ENCODE measurements at regions of chr16 and their contacts with region 1.

Region 1: GRCh38 chr16:29848420-29849297 is 14.4 kb downstream of the CDIPT start:
- DNase-seq: no peak
- H3K4me3 ChIP-seq: no peak overlapping the region
- H3K27ac ChIP-seq: no peak overlapping the region
- H3K27me3 ChIP-seq: no peaks in the 10 kb centered on the region
- CTCF ChIP-seq: peak; percentile 92

Region 2: GRCh38 chr16:29700253-29700987 is 148.2 kb before region 1 on chr16:
- CTCF ChIA-PET with region 1: interaction called, 22 read pairs
- POLR2A ChIA-PET with region 1: no interaction called
- DNase-seq: peak; percentile 72
- H3K4me3 ChIP-seq: no peak overlapping the region
- H3K27ac ChIP-seq: no peak overlapping the region
- H3K27me3 ChIP-seq: peaks cover 7% of the 10 kb centered on the region
- CTCF ChIP-seq: peak; percentile 90

Region 3: DNA sequence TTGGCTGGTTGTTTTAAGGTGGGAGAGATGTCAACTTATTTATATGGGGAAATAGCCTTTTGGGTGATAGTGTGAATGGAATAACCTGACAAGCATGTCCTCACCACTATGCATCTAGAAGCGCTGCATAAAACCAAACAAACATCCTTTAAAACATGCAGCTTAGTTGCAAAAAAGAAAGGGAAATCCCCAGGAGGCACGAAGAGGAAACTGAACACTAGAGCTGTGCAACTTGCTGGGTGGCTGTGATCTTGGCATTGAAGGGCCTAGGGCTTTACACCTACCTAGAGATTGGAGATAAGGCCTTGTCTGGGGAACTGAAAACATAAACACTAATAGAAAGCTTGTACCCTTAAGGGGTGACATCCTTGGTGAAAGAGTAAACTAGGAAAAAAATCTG is 110.1 kb before region 1 on chr16:
- CTCF ChIA-PET with region 1: no interaction called
- POLR2A ChIA-PET with region 1: no interaction called
- DNase-seq: no peak
- H3K4me3 ChIP-seq: no peak overlapping the region
- H3K27ac ChIP-seq: no peak overlapping the region
- H3K27me3 ChIP-seq: peaks cover 16% of the 10 kb centered on the region
- CTCF ChIP-seq: no peak

Region 4: GRCh38 chr16:29757950-29758466 is 90.7 kb before region 1 on chr16:
- CTCF ChIA-PET with region 1: no interaction called
- POLR2A ChIA-PET with region 1: no interaction called
- DNase-seq: peak; percentile 47
- H3K4me3 ChIP-seq: no peak overlapping the region
- H3K27ac ChIP-seq: peak overlapping the region; percentile 57
- H3K27me3 ChIP-seq: peaks cover 3% of the 10 kb centered on the region
- CTCF ChIP-seq: peak; percentile 41; the same call in 1 of the 2 replicates

Region 5: DNA sequence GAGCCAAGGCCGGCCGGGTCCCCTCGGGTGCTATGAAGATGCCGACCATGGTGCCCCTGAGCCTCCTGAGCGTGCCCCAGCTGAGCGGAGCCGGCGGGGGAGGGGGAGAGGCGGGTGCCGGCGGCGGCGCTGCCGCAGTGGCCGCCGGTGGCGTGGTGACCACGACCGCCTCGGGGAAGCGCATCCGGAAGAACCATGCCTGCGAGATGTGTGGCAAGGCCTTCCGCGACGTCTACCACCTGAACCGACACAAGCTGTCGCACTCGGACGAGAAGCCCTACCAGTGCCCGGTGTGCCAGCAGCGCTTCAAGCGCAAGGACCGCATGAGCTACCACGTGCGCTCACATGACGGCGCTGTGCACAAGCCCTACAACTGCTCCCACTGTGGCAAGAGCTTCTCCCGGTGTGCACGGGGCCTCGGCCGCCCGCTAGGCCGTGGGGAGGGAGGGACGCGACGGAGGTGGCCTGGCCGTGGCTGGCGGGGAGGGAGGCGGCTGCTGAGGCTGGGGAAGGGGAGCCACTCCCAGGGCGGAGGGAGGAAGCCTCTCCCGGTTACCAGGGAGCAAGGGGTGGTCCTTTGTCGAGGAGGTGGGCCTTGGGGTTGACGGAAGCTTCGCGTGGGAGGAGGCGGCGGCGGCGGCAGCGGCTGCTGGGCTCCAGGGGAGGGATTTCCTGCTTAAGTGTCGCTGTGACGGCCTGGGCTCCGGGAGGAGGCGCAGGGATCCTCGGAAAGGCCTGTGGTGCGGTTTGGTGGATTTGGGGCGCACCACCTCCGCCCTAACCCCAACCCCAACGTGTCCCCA is 41.0 kb before region 1 on chr16:
- CTCF ChIA-PET with region 1: interaction called, 45 read pairs
- POLR2A ChIA-PET with region 1: interaction called, 6 read pairs
- DNase-seq: peak; percentile 76
- H3K4me3 ChIP-seq: peak overlapping the region; percentile 72
- H3K27ac ChIP-seq: peak overlapping the region; percentile 65
- H3K27me3 ChIP-seq: no peaks in the 10 kb centered on the region
- CTCF ChIP-seq: peak; percentile 62

Region 6: DNA sequence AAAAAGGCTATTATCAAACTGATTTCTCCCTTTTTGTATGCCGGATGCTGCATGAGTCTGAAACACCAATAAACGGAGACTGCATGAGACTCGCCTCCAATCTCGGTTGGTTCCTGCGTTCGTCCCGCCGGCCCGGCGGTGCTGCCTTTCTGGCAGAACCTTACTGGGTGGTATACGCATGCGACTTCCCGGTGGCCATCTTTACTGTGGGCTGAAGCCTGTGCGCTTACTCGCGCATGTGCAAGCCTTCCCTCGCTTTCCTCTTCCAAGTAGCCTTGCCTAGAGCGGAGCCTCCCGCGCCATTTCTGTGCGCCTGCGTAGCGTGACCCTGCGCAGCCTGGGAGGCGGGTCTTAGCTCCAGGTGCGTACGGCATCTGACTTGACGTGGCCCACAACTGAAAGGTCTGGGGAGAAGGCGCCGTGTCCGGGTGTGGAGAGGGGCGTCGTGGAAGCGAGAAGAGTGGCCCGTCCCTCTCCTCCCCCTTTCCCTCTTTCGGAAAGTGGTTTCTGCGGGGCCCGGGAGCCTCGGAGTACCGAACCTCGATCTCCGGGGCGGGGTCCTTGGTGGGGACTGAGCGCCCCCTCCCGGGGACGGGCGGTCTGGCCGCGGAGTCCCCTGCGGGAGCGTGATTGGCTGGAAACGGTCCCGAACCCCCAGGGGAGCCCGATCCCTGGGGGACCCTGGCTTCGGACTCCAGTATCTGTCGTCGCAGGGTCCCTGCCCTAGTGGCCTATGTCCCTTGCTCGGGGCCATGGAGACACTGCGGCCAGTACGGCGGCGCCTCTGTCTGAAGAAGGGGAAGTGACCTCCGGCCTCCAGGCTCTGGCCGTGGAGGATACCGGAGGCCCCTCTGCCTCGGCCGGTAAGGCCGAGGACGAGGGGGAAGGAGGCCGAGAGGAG is 32.6 kb before region 1 on chr16 and contains the start of gene PAGR1:
- CTCF ChIA-PET with region 1: interaction called, 41 read pairs
- POLR2A ChIA-PET with region 1: interaction called, 10 read pairs
- DNase-seq: peak; percentile 100
- H3K4me3 ChIP-seq: peak within 1 kb of the TSS; percentile 83
- H3K27ac ChIP-seq: peak within 1 kb of the TSS; percentile 80
- H3K27me3 ChIP-seq: no peaks in the 10 kb centered on the region
- CTCF ChIP-seq: peak; percentile 85
- polyA plus RNA-seq, gene PAGR1: 14.3 and 14.5 TPM in 2 replicates

Region 7: DNA sequence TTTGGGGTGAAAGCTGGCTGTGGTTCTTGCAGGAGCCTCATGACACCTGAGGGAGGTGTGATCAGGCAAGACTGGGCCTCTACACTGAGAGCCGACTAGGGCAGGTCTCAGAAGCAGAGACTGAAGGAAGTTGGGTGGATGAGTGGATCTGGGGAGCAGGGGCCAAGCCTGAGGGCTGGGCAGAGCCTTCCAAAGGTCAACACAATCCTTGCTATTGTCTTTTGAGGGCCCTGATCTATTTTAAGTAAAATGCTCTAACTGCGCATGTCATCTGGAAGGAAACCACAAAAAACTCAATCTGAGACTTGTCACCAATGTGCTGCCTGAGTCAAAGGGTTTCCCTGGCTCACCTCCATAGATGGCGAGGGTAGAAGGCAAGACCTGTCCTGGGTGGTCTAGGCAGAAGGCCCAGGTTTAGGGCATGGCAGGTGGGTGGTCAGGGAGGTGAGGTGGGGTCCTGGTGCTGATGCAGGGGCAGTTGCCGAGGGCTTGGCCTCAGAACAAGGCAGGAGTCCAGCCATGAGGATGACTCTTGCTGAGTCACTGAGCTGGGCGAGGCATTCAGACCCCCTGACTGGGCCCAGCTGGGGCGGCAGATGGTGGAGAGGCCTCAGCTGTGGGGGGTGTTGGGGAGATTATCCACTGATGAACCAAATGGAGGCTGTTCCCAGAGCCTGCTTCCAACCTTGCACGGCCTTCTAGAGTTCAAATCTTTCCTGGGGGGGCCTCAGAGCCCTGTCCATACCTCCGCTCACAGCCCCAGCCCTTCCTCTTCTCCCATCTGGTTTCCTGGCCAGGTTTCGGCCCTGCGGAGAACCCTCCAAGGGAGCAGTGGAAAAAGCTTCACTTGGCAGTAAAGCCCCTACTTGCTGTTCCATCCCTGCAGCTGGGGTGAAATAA is 23.3 kb before region 1 on chr16:
- CTCF ChIA-PET with region 1: interaction called, 41 read pairs
- POLR2A ChIA-PET with region 1: interaction called, 7 read pairs
- DNase-seq: peak; percentile 80
- H3K4me3 ChIP-seq: peak overlapping the region; percentile 49
- H3K27ac ChIP-seq: peak overlapping the region; percentile 99
- H3K27me3 ChIP-seq: no peaks in the 10 kb centered on the region
- CTCF ChIP-seq: no peak

Region 8: DNA sequence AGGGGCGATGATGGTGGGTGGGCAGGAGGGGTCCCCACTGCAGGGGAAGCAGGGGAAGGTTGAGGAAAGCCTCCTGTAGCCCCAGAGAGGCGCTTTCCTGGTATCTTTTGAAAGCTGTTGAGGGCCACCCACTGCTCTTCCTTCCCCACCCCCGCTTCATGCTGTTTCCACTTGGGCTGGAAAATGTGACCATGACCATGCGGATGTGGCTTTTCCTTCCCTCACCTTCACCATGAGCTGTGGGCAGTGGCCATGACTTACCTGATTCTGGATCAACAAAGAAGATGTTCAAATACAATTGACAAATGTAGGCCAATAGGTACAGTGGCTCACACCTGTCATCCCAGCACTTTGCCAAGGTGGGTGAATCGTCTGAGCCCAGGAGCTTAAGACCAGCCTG is 14.6 kb before region 1 on chr16:
- CTCF ChIA-PET with region 1: interaction called, 21 read pairs
- POLR2A ChIA-PET with region 1: interaction called, 3 read pairs
- DNase-seq: no peak
- H3K4me3 ChIP-seq: no peak overlapping the region
- H3K27ac ChIP-seq: no peak overlapping the region
- H3K27me3 ChIP-seq: no peaks in the 10 kb centered on the region
- CTCF ChIP-seq: no peak

Region 9: GRCh38 chr16:29891525-29892457 is 43.1 kb after region 1 on chr16:
- CTCF ChIA-PET with region 1: no interaction called
- POLR2A ChIA-PET with region 1: no interaction called
- DNase-seq: no peak
- H3K4me3 ChIP-seq: no peak overlapping the region
- H3K27ac ChIP-seq: no peak overlapping the region
- H3K27me3 ChIP-seq: no peaks in the 10 kb centered on the region
- CTCF ChIP-seq: no peak

Region 10: DNA sequence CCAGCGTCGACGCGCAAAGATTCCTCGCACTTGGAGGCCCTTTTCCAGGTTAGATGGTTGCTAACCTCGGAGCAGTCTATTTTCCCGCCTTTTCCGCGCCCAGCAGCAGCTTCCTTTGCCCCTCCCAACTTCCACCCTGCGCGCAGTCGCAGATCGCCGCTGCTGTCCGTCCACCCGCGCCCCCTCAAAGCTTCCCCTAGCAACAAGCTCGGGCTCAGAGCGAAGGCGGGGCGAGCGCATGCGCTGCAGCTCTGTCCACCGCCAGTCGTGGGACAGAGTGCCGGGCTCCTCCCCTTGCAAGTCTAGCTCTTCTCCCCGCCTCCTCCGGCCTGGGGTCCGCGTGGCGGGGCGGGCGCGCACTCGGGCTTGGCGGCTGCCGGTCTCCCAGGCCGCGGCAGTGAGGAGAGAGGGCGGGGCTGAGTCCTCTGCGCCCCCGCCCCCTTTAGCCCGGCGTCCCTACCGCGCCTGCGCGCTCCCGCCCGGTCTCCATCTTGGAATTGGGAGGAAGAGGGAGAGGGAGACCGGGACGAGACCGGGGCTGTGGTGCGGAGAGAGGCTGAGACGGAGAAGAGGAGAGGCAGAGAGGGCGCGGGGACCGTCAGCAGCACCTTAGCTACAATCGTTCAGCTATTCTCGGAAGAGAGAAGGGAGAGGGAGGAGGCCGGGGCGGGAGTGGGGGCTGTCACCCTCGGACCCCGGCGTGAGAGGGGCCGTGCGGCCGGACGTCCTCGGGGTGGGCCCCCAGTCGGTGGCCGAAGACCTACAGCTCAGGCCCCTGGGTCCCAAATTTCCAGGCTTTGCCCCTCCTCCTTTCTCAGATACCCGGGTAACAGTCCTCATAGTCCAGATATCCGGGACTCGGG is 125.0 kb after region 1 on chr16 and contains the start of gene TAOK2:
- CTCF ChIA-PET with region 1: interaction called, 12 read pairs
- POLR2A ChIA-PET with region 1: no interaction called
- DNase-seq: peak; percentile 99
- H3K4me3 ChIP-seq: peak within 1 kb of the TSS; percentile 92
- H3K27ac ChIP-seq: peak within 1 kb of the TSS; percentile 31
- H3K27me3 ChIP-seq: no peaks in the 10 kb centered on the region
- CTCF ChIP-seq: no peak
- polyA plus RNA-seq, gene TAOK2: 16.9 and 18.2 TPM in 2 replicates